AG04450 (cell line): ENCODE measurements at regions of chr4 and their contacts with region 1.

Region 1: DNA sequence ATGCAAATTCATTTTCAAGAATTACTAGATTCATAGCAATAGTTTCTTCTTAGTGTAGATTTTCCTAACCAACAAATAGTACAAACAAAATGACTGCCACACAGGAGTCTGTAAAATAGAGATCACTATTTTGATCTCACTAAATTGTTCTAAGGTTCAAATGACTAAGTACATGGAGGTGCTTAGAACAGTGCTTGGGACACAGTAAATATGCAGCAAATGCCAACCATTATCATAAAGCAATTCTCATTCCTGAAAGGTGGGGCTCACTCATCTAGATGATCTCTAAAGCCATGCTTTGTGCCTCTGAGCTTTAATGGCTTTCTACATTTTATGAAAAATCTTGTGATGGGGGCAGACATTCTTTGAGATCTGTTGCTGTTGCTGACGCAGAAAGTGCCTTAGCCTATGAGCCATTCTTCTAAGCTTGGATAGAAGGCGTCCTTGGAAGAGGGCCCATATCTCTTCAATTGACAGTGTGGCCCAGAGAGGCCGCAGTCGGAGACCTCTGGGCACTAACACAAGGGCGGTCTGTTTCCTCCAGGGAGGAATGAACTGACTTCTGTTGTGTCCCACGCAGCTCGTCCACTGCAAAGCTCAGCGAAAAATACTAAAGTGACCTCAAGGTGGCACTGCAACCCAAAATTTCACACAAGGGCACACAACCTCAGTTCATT is 23.5 kb downstream of the TLR10 start:
- DNase-seq: peak; percentile 30
- H3K4me3 ChIP-seq: no peak overlapping the region
- H3K27ac ChIP-seq: no peak overlapping the region
- H3K27me3 ChIP-seq: no peaks in the 10 kb centered on the region
- CTCF ChIP-seq: peak; percentile 71

Region 2: DNA sequence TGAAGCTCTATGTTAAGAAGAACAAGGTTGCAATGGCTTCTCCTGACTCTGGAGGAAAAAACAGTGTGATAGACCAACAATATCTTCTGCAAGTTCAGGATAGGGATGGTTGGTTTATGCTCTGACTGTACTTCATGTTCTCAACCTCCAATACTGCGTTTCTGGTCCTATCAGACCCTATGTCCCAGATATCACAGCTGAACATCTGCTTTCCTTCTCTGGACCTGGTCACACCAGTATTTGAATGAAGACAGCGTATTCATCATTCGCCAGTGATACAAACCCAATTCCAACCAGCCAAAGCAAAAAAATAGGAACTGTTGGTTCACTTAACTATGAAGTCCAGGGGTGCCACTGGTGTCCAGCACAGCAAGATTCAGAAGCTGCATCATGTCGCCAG is 219.8 kb before region 1 on chr4:
- CTCF ChIA-PET with region 1: no interaction called
- POLR2A ChIA-PET with region 1: no interaction called
- DNase-seq: no peak
- H3K4me3 ChIP-seq: no peak overlapping the region
- H3K27ac ChIP-seq: no peak overlapping the region
- H3K27me3 ChIP-seq: peaks cover 13% of the 10 kb centered on the region
- CTCF ChIP-seq: no peak

Region 3: GRCh38 chr4:38775326-38775725 is 16.1 kb after region 1 on chr4:
- CTCF ChIA-PET with region 1: interaction called, 36 read pairs
- POLR2A ChIA-PET with region 1: interaction called, 3 read pairs
- DNase-seq: no peak
- H3K4me3 ChIP-seq: no peak overlapping the region
- H3K27ac ChIP-seq: no peak overlapping the region
- H3K27me3 ChIP-seq: peaks cover 6% of the 10 kb centered on the region
- CTCF ChIP-seq: no peak

Region 4: DNA sequence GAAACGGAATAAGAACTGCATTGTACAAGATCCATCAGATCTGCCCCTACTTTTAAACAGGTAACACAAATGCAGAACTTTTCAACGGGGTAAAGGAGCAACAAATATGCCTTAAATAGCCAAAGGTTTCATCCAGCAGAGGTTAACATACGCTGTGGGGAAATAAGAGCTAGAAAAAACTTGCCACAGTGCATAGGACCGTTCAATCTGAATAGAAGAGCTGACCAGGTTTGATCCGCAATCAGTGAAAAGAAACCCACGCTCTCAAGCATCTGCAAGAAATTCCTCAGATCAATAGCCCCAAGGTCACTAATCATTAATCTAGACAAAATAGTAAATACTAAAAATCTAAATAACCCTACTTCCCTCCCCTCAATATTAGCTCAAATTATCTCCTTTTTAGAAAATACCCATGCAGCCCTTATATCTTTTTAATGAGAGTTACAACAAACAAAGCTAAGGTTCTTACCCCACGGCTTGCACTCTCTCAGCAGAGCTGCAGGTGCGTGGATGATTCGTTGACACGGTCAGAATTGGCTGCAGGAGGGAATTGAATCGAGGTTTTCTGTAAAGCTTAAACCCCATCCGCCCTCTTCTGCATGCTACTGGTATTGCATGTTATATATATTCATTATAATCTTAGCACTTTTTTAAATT is 23.3 kb after region 1 on chr4 and contains the start of gene TLR10:
- CTCF ChIA-PET with region 1: interaction called, 89 read pairs
- POLR2A ChIA-PET with region 1: interaction called, 3 read pairs
- DNase-seq: peak; percentile 16
- H3K4me3 ChIP-seq: no peak within 1 kb of the TSS
- H3K27ac ChIP-seq: no peak within 1 kb of the TSS
- H3K27me3 ChIP-seq: peaks cover 4% of the 10 kb centered on the region
- CTCF ChIP-seq: peak; percentile 64
- polyA plus RNA-seq, gene TLR10: not detected in 2 replicates

Region 5: GRCh38 chr4:38804654-38805295 is 45.5 kb after region 1 on chr4 and contains the start of gene TLR1:
- CTCF ChIA-PET with region 1: interaction called, 38 read pairs
- POLR2A ChIA-PET with region 1: no interaction called
- DNase-seq: no peak
- H3K4me3 ChIP-seq: no peak within 1 kb of the TSS
- H3K27ac ChIP-seq: no peak within 1 kb of the TSS
- H3K27me3 ChIP-seq: no peaks in the 10 kb centered on the region
- CTCF ChIP-seq: peak; percentile 61
- polyA plus RNA-seq, gene TLR1: 0.88 and 0.93 TPM in 2 replicates

Region 6: DNA sequence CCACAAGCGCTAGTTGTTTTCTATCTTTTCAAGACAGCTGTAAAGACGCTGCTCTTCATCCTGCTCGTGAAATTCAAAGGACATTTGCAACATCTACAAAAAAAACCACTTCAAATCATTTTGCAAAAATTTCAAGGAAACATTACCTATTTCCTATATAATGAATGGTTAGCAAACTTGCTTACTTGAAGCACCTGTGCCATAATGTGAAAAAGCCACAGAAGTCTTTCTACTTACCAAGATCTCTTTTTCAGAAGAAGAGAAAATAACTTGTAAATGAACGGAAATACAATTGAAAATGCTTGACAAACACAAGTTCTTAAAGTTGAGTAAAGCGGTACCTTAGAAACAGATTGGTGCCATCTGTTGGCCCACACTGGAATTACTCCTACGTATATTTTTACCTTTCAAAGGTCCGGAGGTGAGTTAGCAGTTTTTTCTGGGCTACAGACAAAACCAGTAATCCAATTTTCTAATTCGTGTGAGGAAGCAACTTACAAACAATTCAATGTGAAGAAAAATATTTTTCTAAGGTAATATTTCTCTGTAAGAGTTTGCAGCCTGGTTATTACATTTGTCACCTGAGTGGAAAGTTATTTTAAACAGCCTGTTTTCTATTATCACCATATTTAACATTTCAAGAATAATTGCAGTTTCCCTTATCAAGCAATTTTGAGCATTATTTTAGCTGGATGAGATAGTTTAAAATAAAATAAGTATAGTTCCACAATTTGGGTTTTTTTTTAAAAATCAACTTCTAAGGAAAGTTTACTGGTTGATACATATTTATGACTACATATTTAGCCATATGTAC is 97.5 kb after region 1 on chr4 and contains the start of gene TLR6:
- CTCF ChIA-PET with region 1: interaction called, 49 read pairs
- POLR2A ChIA-PET with region 1: no interaction called
- DNase-seq: no peak
- H3K4me3 ChIP-seq: peak within 1 kb of the TSS; percentile 20
- H3K27ac ChIP-seq: peak within 1 kb of the TSS; percentile 94
- H3K27me3 ChIP-seq: no peaks in the 10 kb centered on the region
- CTCF ChIP-seq: peak; percentile 69
- polyA plus RNA-seq, gene TLR6: 2.8 and 3.7 TPM in 2 replicates

Region 7: GRCh38 chr4:38902695-38903094 is 143.4 kb after region 1 on chr4:
- CTCF ChIA-PET with region 1: interaction called, 15 read pairs
- POLR2A ChIA-PET with region 1: no interaction called
- DNase-seq: no peak
- H3K4me3 ChIP-seq: no peak overlapping the region
- H3K27ac ChIP-seq: no peak overlapping the region
- H3K27me3 ChIP-seq: no peaks in the 10 kb centered on the region
- CTCF ChIP-seq: no peak

Region 8: DNA sequence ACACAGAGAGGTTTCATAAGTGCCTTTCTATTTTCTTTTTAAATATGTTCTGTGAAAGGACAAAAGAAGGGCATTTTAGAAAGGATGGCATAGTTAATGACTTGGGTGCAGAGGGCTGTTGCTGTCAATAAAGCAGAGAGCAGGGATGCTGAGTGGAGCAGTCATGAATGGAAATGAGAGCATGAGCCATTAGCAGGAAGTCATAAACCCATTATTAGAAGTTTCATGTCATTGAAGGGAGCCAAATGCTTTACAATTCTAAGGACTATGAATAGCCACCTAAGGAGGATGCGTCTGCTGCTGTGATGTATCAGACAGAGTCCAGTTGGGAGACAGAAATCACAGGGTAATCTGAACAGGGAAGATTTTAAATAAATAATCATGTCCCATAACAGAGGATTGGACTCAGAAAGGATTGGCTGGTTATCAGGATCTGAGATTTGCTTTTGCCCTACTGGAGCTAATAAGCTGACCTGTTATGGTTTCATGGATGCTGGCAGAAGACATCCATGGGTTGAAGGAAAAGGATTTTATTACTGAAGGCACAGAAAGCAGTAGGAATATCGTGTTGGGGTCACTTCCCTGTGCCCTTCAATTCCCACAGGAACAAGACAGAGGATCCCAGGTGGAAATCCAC is 375.6 kb after region 1 on chr4:
- CTCF ChIA-PET with region 1: interaction called, 24 read pairs
- POLR2A ChIA-PET with region 1: no interaction called
- DNase-seq: no peak
- H3K4me3 ChIP-seq: no peak overlapping the region
- H3K27ac ChIP-seq: peak overlapping the region; percentile 41
- H3K27me3 ChIP-seq: no peaks in the 10 kb centered on the region
- CTCF ChIP-seq: no peak